Natural killer cell (primary cell): ENCODE measurements at regions of chr11 and their contacts with region 1.

Region 1: GRCh38 chr11:17991783-17992433 is 20.9 kb downstream of the SERGEF start:
- DNase-seq: peak in 1 of 2 donors; percentile 73
- ATAC-seq: peak; percentile 71 to 81 (median 80)
- H3K4me3 ChIP-seq: no peak overlapping the region
- H3K4me3 Mint-ChIP-seq: no peak overlapping the region
- H3K27ac ChIP-seq: no peak overlapping the region
- H3K27ac Mint-ChIP-seq: no peak overlapping the region
- H3K4me1 ChIP-seq: no peaks in the 10 kb centered on the region
- H3K4me1 Mint-ChIP-seq: peaks cover 0 to 4% of the 10 kb centered on the region in 2 donors
- H3K27me3 ChIP-seq: no peaks in the 10 kb centered on the region
- H3K27me3 Mint-ChIP-seq: no peaks in the 10 kb centered on the region
- CTCF ChIP-seq: peak; percentile 91

Region 2: DNA sequence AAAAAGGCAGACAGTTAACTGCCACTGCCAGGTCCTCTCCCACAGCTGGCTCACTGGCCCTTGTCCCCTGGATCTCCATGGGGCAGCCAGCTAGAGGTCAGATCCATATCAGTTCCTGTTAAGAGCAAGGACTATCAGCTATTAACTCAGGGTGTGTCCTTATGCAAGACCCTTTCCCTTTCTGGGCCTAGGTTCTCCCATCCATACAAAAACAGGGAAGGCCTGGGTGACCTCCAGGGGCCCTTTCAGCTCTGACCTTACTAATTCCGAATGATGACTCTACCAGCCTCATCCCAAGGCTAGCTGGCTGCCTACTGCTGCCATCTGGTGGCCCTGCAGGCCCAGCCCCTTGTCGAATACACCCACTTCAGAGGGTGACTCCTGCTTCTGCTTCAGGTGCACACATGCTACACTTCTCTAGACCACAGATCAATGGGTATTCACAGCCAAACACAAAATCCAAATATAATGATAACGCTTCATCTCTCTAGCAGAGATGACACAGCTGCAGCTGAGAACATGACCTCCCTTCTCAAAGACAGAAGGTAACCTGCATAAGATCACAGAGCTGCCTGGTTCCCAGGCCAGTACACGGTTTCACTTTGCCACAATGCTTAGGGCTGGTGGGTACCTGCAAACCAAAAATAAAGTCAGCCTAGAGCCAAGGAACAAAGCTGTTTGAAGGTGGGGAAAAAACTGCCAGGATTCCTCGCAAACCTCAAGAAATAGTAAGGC is 13.2 kb before region 1 on chr11:
- intact Hi-C with region 1: no loop called
- DNase-seq: peak in 1 of 2 donors; percentile 19
- ATAC-seq: no peak
- H3K4me3 ChIP-seq: no peak overlapping the region
- H3K4me3 Mint-ChIP-seq: no peak overlapping the region
- H3K27ac ChIP-seq: no peak overlapping the region
- H3K27ac Mint-ChIP-seq: no peak overlapping the region
- H3K4me1 ChIP-seq: no peaks in the 10 kb centered on the region
- H3K4me1 Mint-ChIP-seq: peaks cover 5 to 6% of the 10 kb centered on the region in 2 donors
- H3K27me3 ChIP-seq: no peaks in the 10 kb centered on the region
- H3K27me3 Mint-ChIP-seq: no peaks in the 10 kb centered on the region
- CTCF ChIP-seq: no peak

Region 3: GRCh38 chr11:18105802-18106574 is 114.1 kb after region 1 on chr11 and contains the start of gene SAAL1:
- intact Hi-C with region 1: loop called (anchors 1 kb)
- DNase-seq: peak; percentile 86 to 94
- ATAC-seq: peak; percentile 99
- H3K4me3 ChIP-seq: peak within 1 kb of the TSS; percentile 93
- H3K4me3 Mint-ChIP-seq: peak within 1 kb of the TSS; percentile 97
- H3K27ac ChIP-seq: peak within 1 kb of the TSS; percentile 62
- H3K27ac Mint-ChIP-seq: peak within 1 kb of the TSS; percentile 81 to 92
- H3K4me1 ChIP-seq: peaks cover 11% of the 10 kb centered on the region
- H3K4me1 Mint-ChIP-seq: peaks cover 25 to 31% of the 10 kb centered on the region in 2 donors
- H3K27me3 ChIP-seq: no peaks in the 10 kb centered on the region
- H3K27me3 Mint-ChIP-seq: peaks cover 4 to 9% of the 10 kb centered on the region in 2 donors
- CTCF ChIP-seq: peak; percentile 89
- total RNA-seq, gene SAAL1: 27.8 to 32.7 (median 29.5) TPM